Activated CD4-positive, alpha-beta memory T cell treated with anti-CD3 and anti-CD28 coated beads for 36 hours (primary cell): ENCODE measurements at regions of chr3 and their contacts with region 1.

Region 1: DNA sequence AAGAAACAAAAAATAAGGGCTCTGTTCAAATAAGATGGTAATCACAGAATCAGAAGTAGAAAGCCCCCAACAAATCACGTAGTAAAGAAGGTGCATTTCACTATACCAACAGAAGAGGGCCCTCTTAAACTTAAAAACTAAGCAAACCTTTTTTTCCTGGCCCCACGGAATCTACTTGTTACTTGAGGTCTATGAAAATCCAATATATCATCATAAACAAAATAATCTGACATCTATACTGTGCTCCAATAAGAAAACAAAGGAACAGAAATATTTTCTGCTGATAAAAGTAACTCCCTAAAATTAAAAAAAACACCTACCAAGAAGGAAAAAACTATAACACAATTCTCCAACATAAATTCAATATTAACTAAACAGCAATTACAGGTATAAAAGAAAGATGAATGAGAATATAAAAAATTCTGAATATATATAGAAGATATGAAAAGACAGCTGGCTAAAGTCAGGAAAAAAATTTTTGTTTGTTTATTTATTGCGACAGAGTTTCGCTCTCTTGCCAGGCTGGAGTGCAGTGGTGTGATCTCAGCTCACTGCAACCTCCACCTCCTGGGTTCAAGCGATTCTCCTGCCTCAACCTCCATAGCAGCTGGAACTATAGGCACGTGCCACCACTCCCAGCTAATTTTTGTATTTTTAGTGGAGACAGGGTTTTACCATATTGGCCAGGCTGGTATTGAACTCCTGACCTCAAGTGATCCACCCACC is 81.8 kb downstream of the CLASP2 start:
- DNase-seq: no peak
- H3K4me3 Mint-ChIP-seq: no peak overlapping the region
- H3K27ac Mint-ChIP-seq: no peak overlapping the region
- H3K4me1 Mint-ChIP-seq: no peaks in the 10 kb centered on the region
- H3K27me3 Mint-ChIP-seq: no peaks in the 10 kb centered on the region

Region 2: GRCh38 chr3:33773637-33774036 is 137.3 kb after region 1 on chr3:
- CTCF ChIA-PET with region 1: interaction called, 21 read pairs
- POLR2A ChIA-PET with region 1: no interaction called
- intact Hi-C with region 1: loop called (anchors 1 kb)
- DNase-seq: no peak
- H3K4me3 Mint-ChIP-seq: no peak overlapping the region
- H3K27ac Mint-ChIP-seq: no peak overlapping the region
- H3K4me1 Mint-ChIP-seq: no peaks in the 10 kb centered on the region
- H3K27me3 Mint-ChIP-seq: no peaks in the 10 kb centered on the region